ENCODE measurements at regions of chr15 and their contacts with region 1.

Region 1: DNA sequence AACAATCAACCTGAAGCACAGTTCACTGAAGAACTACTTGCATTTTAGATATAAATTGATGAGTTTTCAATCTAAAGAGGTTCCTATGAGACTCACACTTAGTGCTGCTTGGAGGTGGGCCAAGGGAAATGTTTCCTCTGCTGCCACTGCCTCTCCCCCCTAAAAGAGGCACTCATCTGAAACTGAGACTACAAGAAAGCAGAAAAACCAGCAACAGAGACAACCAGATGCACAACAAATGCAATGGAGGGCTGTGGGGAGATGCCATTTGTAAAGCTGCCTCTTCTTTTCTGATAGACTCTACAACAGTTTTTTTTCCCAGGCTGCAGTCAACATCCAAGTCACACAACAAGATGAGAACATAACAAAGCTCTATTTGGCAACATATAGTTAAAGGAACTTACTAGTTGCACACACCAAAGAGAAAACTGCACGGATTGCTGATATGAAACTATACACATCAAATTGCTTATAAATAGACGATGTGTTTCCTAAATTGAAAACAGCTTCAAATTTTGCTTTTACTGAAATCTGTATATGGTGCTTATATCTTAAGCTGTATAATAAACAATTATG is 11.0 kb downstream of the TSPAN3 start:
- DNase-seq: no peak
- H3K4me3 ChIP-seq: no peak overlapping the region
- H3K27ac ChIP-seq: no peak overlapping the region
- H3K4me1 ChIP-seq: peaks cover 0 to 8% (median 6%) of the 10 kb centered on the region in 4 experiments; a peak in 3 of 7 replicates
- H3K27me3 ChIP-seq: no peaks in the 10 kb centered on the region
- CTCF ChIP-seq: no peak
- EP300 ChIP-seq: no peak
- POLR2A ChIP-seq: no peak
- RAD21 ChIP-seq: no peak

Region 2: GRCh38 chr15:76994971-76995945 is 64.6 kb before region 1 on chr15 and contains the start of gene PSTPIP1:
- CTCF ChIA-PET with region 1: no interaction called
- POLR2A ChIA-PET with region 1: no interaction called
- DNase-seq: no peak
- H3K4me3 ChIP-seq: no peak within 1 kb of the TSS
- H3K27ac ChIP-seq: no peak within 1 kb of the TSS
- H3K4me1 ChIP-seq: no peaks in the 10 kb centered on the region; a peak in 1 of 7 replicates
- H3K27me3 ChIP-seq: no peaks in the 10 kb centered on the region; a peak in 1 of 7 replicates
- CTCF ChIP-seq: no peak
- EP300 ChIP-seq: no peak
- POLR2A ChIP-seq: no peak
- RAD21 ChIP-seq: no peak
- total RNA-seq, gene PSTPIP1: 0.63 and 1.8 TPM in 2 replicates

Region 3: DNA sequence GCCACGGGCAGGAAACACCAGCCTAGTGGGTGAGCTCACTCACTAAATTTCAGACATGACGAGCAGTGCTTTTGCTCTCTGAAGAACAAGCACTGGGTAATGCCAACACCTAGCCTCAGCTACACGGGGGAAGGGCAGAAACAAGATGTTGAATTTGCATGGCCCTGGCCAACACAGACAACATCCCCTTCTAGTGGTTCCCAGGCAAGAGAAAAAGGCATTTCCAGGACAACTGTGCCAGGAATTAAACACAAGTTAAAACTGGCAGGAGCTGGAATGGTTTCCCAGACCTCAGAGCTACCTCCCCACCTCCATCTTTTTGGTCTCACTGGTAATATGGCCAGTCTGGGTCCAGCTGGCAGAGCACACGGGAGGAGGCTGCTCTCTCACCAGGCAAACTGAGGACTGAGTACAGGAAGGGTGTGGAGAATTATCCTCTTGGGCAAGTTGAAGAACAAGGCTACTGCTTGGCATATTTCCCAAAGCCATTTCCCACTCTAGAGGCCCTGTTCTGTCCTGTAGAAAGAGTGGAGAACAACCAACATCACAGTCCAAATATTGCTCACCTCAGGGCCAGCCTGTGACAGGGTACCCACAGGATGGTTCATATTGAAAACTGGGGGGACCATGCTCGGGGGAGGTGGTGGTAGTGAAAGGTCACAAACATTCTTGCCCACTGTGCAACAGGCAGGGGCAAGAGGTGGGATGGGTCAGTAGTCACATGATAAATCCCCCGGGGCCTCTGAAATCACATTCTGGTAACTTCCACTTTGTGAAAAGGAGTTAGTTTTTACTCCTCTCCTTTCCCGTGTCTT is 15.4 kb before region 1 on chr15:
- CTCF ChIA-PET with region 1: interaction called, 3 read pairs
- POLR2A ChIA-PET with region 1: interaction called, 11 read pairs
- DNase-seq: no peak
- H3K4me3 ChIP-seq: no peak overlapping the region
- H3K27ac ChIP-seq: no peak overlapping the region
- H3K4me1 ChIP-seq: no peaks in the 10 kb centered on the region
- H3K27me3 ChIP-seq: no peaks in the 10 kb centered on the region
- CTCF ChIP-seq: no peak
- EP300 ChIP-seq: no peak
- POLR2A ChIP-seq: no peak
- RAD21 ChIP-seq: no peak

Measured in H1 (cell line).